Activated T-helper 2 cell treated with anti-CD3 and anti-CD28 coated beads, Interferon-gamma antibody, Interleukin-2, Interleukin-4, amounts not matched to agents 10 μg/mL and 5 μg/mL and 100 μg/mL, durations not matched to agents 14 hours and 24 hours and 36 hours (primary cell): ENCODE measurements at regions of chr9 and their contacts with region 1.

Region 1: GRCh38 chr9:128552153-128552743 is at the start of gene SPTAN1:
- DNase-seq: peak; percentile 94
- H3K4me3 Mint-ChIP-seq: peak within 1 kb of the TSS; percentile 86
- H3K27ac Mint-ChIP-seq: peak within 1 kb of the TSS; percentile 91
- H3K4me1 Mint-ChIP-seq: peaks cover 36% of the 10 kb centered on the region
- H3K27me3 Mint-ChIP-seq: no peaks in the 10 kb centered on the region
- total RNA-seq, gene SPTAN1: 286 and 303 TPM in 2 replicates

Region 2: GRCh38 chr9:128159784-128160602 is 392.3 kb before region 1 on chr9 and contains the start of gene BBLN:
- intact Hi-C with region 1: loop called (anchors 10 kb)
- DNase-seq: peak; percentile 90
- H3K4me3 Mint-ChIP-seq: peak within 1 kb of the TSS; percentile 81
- H3K27ac Mint-ChIP-seq: peak within 1 kb of the TSS; percentile 83
- H3K4me1 Mint-ChIP-seq: peaks cover 17% of the 10 kb centered on the region
- H3K27me3 Mint-ChIP-seq: no peaks in the 10 kb centered on the region
- total RNA-seq, gene BBLN: 93.8 and 103 TPM in 2 replicates

Region 3: GRCh38 chr9:128455849-128456612 is 96.2 kb before region 1 on chr9 and contains the start of gene ODF2:
- intact Hi-C with region 1: loop called (anchors 5 kb)
- DNase-seq: peak; percentile 98
- H3K4me3 Mint-ChIP-seq: peak within 1 kb of the TSS; percentile 93
- H3K27ac Mint-ChIP-seq: peak within 1 kb of the TSS; percentile 87
- H3K4me1 Mint-ChIP-seq: peaks cover 12% of the 10 kb centered on the region
- H3K27me3 Mint-ChIP-seq: no peaks in the 10 kb centered on the region
- total RNA-seq, gene ODF2: 61.5 and 64.4 TPM in 2 replicates

Region 4: GRCh38 chr9:128504485-128505413 is 47.5 kb before region 1 on chr9 and contains the start of gene GLE1:
- intact Hi-C with region 1: loop called (anchors 1 kb)
- DNase-seq: peak; percentile 95
- H3K4me3 Mint-ChIP-seq: peak within 1 kb of the TSS; percentile 98
- H3K27ac Mint-ChIP-seq: peak within 1 kb of the TSS; percentile 97
- H3K4me1 Mint-ChIP-seq: peaks cover 18% of the 10 kb centered on the region
- H3K27me3 Mint-ChIP-seq: no peaks in the 10 kb centered on the region
- total RNA-seq, gene GLE1: 56.0 and 57.5 TPM in 2 replicates

Region 5: DNA sequence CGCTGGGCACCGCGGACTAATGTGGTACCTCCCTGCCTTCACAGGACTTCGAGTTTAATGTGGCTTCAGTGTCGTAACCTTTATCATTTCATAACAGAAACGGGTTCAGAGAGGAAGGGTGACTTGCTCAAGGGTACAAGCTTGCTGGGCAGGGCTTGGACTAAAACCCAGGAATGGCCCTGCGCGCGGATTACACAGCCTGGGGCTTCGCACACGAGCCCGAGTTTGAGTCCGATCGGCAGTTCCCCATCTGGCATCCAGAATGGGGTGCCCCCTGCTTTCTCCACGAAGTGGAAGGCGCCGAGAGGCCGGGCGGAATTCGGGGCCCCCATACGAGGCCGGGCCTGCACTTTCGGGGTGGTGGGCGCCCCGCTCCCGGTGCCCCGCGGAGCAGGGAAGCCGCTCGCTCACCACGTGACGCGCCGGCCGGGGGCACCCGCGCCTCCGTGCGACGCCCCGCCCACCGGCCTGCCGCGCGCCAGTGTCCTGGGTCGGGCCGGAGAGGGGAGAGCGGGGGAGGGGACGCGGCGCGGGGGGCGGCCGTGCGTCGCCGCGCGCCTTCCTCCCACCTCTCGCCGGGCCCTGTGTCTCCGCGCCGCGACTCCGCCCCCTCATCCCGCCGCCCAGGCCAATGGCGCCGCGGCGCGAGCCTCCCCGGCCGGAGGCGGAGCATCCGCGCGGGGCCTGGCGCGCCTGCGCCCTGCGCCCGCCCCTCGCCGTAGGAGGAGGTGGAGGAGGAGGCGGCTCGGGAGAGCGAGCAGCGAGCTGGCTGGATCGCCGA is 136.5 kb after region 1 on chr9 and contains the start of gene SET:
- intact Hi-C with region 1: loop called (anchors 5 kb)
- DNase-seq: peak; percentile 92
- H3K4me3 Mint-ChIP-seq: peak within 1 kb of the TSS; percentile 82
- H3K27ac Mint-ChIP-seq: peak within 1 kb of the TSS; percentile 91
- H3K4me1 Mint-ChIP-seq: peaks cover 47% of the 10 kb centered on the region
- H3K27me3 Mint-ChIP-seq: no peaks in the 10 kb centered on the region
- total RNA-seq, gene SET: 749 and 756 TPM in 2 replicates

Region 6: GRCh38 chr9:128723866-128724743 is 171.9 kb after region 1 on chr9 and contains the start of gene ZDHHC12:
- intact Hi-C with region 1: loop called (anchors 10 kb)
- DNase-seq: peak; percentile 99
- H3K4me3 Mint-ChIP-seq: peak within 1 kb of the TSS; percentile 98
- H3K27ac Mint-ChIP-seq: peak within 1 kb of the TSS; percentile 90
- H3K4me1 Mint-ChIP-seq: peaks cover 35% of the 10 kb centered on the region
- H3K27me3 Mint-ChIP-seq: no peaks in the 10 kb centered on the region
- total RNA-seq, gene ZDHHC12: 51.7 and 53.2 TPM in 2 replicates